Psoas muscle (tissue), 8 donors: ENCODE measurements at regions of chr10 and their contacts with region 1.

Region 1: DNA sequence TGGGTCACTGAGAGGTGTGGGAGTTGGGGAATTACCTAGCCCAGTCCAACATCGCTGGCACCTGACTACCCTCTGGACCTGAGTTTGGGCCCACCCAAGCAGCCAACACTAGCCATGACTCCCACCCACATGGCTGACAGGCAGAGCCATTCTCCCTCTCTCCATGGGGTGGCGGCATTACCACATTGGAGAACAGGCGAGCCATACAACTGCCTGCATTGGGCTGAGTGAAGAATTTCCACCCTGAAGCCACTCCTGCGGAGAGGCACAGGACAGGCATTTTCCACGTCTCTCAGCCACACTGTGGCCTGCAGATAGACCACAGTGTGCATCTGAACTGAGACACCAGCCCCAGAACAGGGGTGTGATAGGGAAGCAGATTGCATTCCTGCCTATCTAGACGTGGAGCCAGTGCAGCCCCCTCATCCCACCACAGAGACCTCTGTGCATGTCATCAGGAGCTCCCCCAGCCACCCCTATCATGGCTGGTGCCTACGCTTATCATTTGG is 58.2 kb upstream of the ANTXRL start:
- DNase-seq: peak; percentile 54 to 70
- ATAC-seq: peak; percentile 84 to 90 (median 88)
- H3K4me3 ChIP-seq: no peak overlapping the region
- H3K27ac ChIP-seq: no peak overlapping the region
- H3K4me1 ChIP-seq: no peaks in the 10 kb centered on the region
- H3K27me3 ChIP-seq: no peaks in the 10 kb centered on the region
- CTCF ChIP-seq: peak; percentile 85

Region 2: DNA sequence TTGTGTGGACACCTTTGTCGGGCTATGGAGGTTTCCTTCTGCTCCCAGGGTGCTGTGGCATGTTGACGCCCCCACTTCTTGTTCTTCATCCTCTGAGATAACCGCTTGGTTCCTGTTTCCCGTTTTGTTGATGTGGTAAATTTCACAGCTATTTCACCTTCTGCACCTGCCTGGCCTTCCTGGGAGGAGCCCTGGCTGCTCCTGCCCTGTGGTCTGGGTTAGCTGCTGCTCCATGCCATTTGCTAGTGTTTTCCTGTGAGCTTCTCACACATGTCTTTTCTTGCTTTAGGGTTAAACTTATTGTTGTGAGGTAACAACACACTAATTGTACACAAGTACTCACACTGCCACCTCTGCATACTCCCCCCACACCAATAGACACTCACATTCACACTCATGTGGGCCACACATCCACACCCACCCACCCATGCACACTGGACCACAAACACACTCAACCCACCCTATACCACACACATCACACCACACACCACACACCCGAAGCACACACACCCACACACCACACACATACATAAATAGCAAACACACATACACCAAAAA is 136.0 kb before region 1 on chr10:
- intact Hi-C with region 1: no loop called
- DNase-seq: no peak
- ATAC-seq: no peak
- H3K4me3 ChIP-seq: no peak overlapping the region
- H3K27ac ChIP-seq: no peak overlapping the region
- H3K4me1 ChIP-seq: no peaks in the 10 kb centered on the region
- H3K27me3 ChIP-seq: no peaks in the 10 kb centered on the region
- CTCF ChIP-seq: no peak

Region 3: DNA sequence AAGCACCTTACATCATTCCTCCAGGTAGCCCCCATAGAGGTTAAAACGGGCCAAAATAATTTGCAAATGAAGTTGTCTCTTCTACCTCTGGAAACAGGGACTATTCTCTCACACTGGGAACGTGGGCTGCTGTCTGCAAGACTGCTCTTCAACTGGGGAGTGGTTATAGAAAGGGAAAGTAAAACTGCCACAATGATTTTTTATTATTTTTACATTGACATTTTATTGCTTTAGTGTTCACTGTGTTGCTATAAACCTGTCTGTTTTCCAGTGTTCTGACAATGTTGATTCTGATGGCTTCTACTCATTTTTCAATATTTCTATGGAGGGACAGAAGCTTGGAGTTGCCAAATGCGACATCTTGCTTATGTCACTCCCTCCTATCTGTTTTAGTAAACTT is 57.0 kb before region 1 on chr10:
- intact Hi-C with region 1: no loop called
- DNase-seq: no peak
- ATAC-seq: no peak
- H3K4me3 ChIP-seq: no peak overlapping the region
- H3K27ac ChIP-seq: no peak overlapping the region
- H3K4me1 ChIP-seq: no peaks in the 10 kb centered on the region
- H3K27me3 ChIP-seq: no peaks in the 10 kb centered on the region
- CTCF ChIP-seq: no peak

Region 4: DNA sequence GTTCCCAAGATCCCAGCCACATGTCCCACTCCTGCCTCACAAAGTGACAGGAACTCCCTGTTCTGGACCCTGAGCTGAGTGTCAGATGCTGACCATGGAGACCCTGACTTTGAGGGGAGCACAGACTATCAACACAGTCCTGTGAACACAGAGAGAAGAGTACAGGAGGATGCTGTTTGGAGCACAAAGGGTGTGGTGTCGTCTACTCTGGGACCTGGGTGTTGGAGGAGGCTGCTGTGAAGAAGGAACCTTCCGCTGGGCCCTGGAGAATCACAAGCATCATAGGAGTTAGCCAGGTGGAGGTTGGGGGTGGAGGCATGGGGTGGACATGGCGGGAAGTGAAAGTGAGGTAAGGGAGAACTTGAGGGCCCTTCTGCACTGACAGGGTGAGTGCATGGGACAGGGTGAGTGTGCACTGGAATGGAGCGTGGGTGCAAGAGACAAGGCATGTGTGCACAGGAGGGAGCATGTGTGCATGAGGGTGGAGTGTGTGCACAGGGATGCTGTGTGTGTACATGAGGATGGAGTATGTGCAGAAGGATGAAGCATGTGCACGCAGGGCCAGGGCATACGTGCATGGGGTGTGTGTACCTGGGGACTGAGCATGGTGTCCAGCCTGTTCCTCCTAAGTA is 12.5 kb before region 1 on chr10:
- intact Hi-C with region 1: no loop called
- DNase-seq: no peak
- ATAC-seq: no peak
- H3K4me3 ChIP-seq: no peak overlapping the region
- H3K27ac ChIP-seq: no peak overlapping the region
- H3K4me1 ChIP-seq: no peaks in the 10 kb centered on the region
- H3K27me3 ChIP-seq: no peaks in the 10 kb centered on the region
- CTCF ChIP-seq: no peak

Region 5: GRCh38 chr10:46325023-46325422 is 96.4 kb after region 1 on chr10:
- intact Hi-C with region 1: loop called in 1 of 2 experiments (anchors 10 kb)
- DNase-seq: no peak
- ATAC-seq: no peak
- H3K4me3 ChIP-seq: no peak overlapping the region
- H3K27ac ChIP-seq: no peak overlapping the region
- H3K4me1 ChIP-seq: no peaks in the 10 kb centered on the region
- H3K27me3 ChIP-seq: no peaks in the 10 kb centered on the region
- CTCF ChIP-seq: peak; percentile 26

Region 6: DNA sequence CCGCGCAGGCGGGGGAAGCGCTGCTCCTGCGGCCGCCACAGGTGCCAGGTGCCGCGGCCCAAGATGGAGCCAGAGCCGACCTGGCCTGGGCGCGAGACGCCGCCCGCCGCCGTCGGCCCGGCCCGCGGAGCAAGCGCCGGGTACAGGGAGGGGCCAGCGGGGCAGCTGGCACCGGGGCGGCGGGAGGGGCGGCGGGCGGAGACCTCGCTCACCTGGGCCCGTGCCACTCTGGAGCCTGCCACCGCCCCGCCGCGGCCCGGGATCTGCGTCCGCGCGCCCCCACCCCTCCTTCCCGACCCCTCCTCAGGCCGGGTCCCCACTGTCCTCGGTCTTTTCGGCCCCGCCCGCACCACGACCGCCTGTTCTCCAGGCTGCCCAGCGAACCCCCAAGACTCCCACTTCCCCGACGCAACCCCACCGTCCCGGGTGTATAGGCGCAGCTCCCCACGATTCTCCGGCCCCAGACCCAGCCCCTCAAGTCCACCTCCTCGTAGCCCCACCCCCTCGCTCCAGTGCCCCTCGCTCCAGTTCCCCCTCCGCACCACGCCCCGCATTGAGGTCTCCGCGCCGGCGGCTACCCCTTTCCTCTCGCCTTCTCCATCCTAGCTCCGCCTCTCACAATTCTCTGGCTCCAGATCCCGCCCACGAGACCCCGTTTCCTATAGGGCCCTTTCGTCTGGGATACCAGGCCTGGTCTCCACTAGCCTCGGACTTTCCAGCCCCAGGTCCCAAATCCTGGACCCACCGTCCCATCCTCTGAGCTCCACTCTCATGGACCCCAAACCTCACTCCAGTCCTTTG is 328.1 kb after region 1 on chr10 and contains the start of gene GPRIN2:
- intact Hi-C with region 1: loop called in 1 of 2 experiments (anchors 10 kb)
- DNase-seq: peak; percentile 21 to 53
- ATAC-seq: no peak
- H3K4me3 ChIP-seq: peak within 1 kb of the TSS; percentile 45
- H3K27ac ChIP-seq: no peak within 1 kb of the TSS
- H3K4me1 ChIP-seq: no peaks in the 10 kb centered on the region
- H3K27me3 ChIP-seq: peaks cover 0 to 76% (median 14%) of the 10 kb centered on the region in 3 donors
- CTCF ChIP-seq: no peak
- total RNA-seq, gene GPRIN2: not detected